ENCODE measurements at regions of chr19 and their contacts with region 1.

Region 1: GRCh38 chr19:47348819-47349795 is at the start of gene DHX34:
- H3K4me3 Mint-ChIP-seq: peak within 1 kb of the TSS; percentile 87
- H3K27ac Mint-ChIP-seq: peak within 1 kb of the TSS; percentile 89
- H3K4me1 Mint-ChIP-seq: peaks cover 38% of the 10 kb centered on the region
- H3K27me3 Mint-ChIP-seq: no peaks in the 10 kb centered on the region

Region 2: GRCh38 chr19:47305309-47305751 is 43.8 kb before region 1 on chr19:
- intact Hi-C with region 1: loop called (anchors 5 kb)
- H3K4me3 Mint-ChIP-seq: no peak overlapping the region
- H3K27ac Mint-ChIP-seq: peak overlapping the region; percentile 51
- H3K4me1 Mint-ChIP-seq: peaks cover 56% of the 10 kb centered on the region
- H3K27me3 Mint-ChIP-seq: peaks cover 18% of the 10 kb centered on the region

Region 3: DNA sequence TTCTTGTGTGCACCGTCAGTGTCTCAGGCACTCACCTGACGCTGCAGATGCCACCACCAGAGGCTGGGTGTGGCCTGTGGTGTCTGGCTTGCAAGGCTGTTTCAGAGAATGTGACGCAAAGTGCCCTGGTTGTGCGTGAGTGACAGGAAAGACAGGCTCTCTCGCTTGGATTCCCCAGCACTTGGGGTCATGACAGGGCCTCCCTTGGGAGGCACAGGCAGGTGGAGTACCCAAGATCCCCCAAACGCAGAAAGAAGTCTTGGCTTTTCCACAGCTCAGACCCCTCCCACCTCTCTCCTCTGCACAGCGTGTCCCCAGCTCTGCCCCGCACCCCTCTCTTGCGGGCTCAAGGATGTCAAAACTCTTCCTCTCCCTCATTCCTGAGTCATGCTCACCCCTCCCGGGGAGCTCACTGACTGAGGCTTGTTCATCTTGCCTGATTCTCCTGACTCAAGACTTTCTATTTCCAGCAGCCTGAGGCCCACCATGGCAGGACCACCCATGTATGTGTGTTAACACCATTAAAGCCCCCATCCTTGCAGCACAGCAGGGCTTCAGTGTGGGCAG is 21.0 kb after region 1 on chr19:
- intact Hi-C with region 1: no loop called
- H3K4me3 Mint-ChIP-seq: no peak overlapping the region
- H3K27ac Mint-ChIP-seq: peak overlapping the region; percentile 65
- H3K4me1 Mint-ChIP-seq: peaks cover 23% of the 10 kb centered on the region
- H3K27me3 Mint-ChIP-seq: no peaks in the 10 kb centered on the region

Region 4: GRCh38 chr19:47381653-47382279 is 32.7 kb after region 1 on chr19:
- intact Hi-C with region 1: loop called (anchors 5 kb)
- H3K4me3 Mint-ChIP-seq: no peak overlapping the region
- H3K27ac Mint-ChIP-seq: peak overlapping the region; percentile 69
- H3K4me1 Mint-ChIP-seq: peaks cover 56% of the 10 kb centered on the region
- H3K27me3 Mint-ChIP-seq: no peaks in the 10 kb centered on the region